HAP-1 (cell line): ENCODE measurements at regions of chr16 and their contacts with region 1.

Region 1: GRCh38 chr16:55711959-55712876 is 56.4 kb downstream of the SLC6A2 start:
- DNase-seq: peak; percentile 50 to 79
- H3K4me3 ChIP-seq: no peak overlapping the region
- H3K4me1 ChIP-seq: no peaks in the 10 kb centered on the region
- H3K27me3 ChIP-seq: no peaks in the 10 kb centered on the region

Region 2: DNA sequence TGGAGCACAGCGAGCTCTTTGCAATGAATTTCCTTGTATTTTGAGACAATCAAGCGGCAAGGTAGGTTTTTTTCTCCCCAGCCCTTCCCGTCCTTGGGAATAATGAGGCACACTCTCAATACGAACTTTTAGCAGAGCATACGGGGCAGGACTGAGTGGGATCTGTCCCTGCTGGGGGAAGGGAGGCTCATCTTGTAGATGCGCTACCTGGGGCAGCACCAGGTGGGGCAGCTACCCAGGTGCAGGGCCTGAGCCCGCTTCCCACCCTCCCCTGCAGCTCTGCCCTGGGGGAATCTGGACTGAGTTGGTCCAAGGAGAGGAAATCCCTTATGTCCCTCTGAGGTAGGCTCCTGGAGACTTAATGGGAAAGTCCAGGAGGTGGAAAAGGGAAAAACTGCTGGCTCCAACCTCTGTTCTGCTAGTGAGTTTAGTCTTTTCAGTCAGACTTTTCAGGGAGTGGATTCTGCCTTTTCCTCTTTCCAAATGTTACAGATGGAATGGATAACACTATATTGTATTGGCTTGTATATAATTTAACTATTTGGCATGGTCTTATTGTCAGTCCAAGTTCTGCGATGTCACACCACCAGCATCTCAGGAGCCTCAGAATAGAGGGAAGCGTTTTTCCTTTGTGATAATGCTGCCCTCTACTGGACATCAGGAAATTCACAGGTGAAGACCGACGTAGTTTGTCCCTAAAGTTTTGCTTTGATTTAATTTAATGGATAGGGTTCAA is 130.3 kb after region 1 on chr16:
- in situ Hi-C with region 1: loop called (anchors 5 kb)
- DNase-seq: peak; percentile 38 to 53
- H3K4me3 ChIP-seq: no peak overlapping the region
- H3K4me1 ChIP-seq: no peaks in the 10 kb centered on the region
- H3K27me3 ChIP-seq: peaks cover 9% of the 10 kb centered on the region